Spleen (tissue), 13 donors: ENCODE measurements at regions of chr6 and their contacts with region 1.

Region 1: GRCh38 chr6:32570363-32570905 is 19.2 kb downstream of the HLA-DRB1 start:
- DNase-seq: no peak
- H3K4me3 ChIP-seq: no peak overlapping the region
- H3K27ac ChIP-seq: no peak overlapping the region
- H3K4me1 ChIP-seq: no peaks in the 10 kb centered on the region
- H3K27me3 ChIP-seq: no peaks in the 10 kb centered on the region
- CTCF ChIP-seq: no peak
- POLR2A ChIP-seq: no peak

Region 2: GRCh38 chr6:32445321-32445854 is 125.0 kb before region 1 on chr6:
- intact Hi-C with region 1: no loop called
- DNase-seq: no peak
- H3K4me3 ChIP-seq: no peak overlapping the region
- H3K27ac ChIP-seq: no peak overlapping the region
- H3K4me1 ChIP-seq: peaks cover 0 to 48% (median 31%) of the 10 kb centered on the region in 6 donors
- H3K27me3 ChIP-seq: no peaks in the 10 kb centered on the region
- CTCF ChIP-seq: no peak
- POLR2A ChIP-seq: no peak

Region 3: GRCh38 chr6:32483968-32484636 is 86.3 kb before region 1 on chr6:
- intact Hi-C with region 1: loop called (anchors 5 kb)
- DNase-seq: peak; percentile 72
- H3K4me3 ChIP-seq: no peak overlapping the region
- H3K27ac ChIP-seq: no peak overlapping the region
- H3K4me1 ChIP-seq: no peaks in the 10 kb centered on the region
- H3K27me3 ChIP-seq: no peaks in the 10 kb centered on the region
- CTCF ChIP-seq: no peak
- POLR2A ChIP-seq: no peak

Region 4: DNA sequence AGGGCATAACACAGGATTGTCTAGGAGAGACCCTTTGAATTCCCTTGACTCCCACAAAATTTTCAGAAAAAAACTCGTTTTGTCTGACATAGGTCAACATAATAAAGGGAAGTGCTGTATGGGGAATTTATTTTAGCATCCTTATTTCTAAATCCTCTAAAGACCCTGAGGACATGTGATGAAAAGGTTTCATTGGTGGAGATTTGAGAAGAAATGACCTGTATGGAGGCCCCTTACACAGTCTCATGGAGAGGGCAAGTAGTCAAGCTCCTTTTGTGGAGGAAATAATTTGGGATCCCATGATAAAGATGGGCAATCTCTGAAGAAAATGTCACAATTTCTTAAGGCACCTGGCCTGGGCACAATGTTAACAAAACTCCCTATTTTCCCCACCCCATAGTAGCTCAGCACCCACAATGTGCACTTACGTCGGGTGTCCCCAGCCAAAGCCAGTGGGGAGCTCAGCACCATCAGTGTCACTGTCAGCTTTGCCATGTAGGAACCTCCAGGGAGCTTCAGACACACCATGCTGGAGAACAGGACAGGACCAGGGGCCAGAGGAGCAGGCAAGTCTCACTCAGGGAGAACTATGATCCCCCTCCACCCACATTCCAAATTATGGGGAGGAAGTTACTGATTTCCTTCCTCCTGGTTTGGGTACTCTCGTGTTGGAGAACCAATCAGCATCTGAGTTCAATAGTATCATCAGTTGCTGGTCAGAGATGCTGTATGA is 40.6 kb before region 1 on chr6 and contains the start of gene HLA-DRB5:
- intact Hi-C with region 1: loop called (anchors 5 kb)
- DNase-seq: peak; percentile 83
- H3K4me3 ChIP-seq: peak within 1 kb of the TSS in 4 of 8 donors; percentile 18 to 51 (median 28)
- H3K27ac ChIP-seq: peak within 1 kb of the TSS in 5 of 8 donors; percentile 53 to 90 (median 67)
- H3K4me1 ChIP-seq: no peaks in the 10 kb centered on the region
- H3K27me3 ChIP-seq: no peaks in the 10 kb centered on the region
- CTCF ChIP-seq: no peak
- POLR2A ChIP-seq: peak in 1 of 3 donors; percentile 86
- total RNA-seq, gene HLA-DRB5: 1.9 to 633 (median 121) TPM

Region 5: DNA sequence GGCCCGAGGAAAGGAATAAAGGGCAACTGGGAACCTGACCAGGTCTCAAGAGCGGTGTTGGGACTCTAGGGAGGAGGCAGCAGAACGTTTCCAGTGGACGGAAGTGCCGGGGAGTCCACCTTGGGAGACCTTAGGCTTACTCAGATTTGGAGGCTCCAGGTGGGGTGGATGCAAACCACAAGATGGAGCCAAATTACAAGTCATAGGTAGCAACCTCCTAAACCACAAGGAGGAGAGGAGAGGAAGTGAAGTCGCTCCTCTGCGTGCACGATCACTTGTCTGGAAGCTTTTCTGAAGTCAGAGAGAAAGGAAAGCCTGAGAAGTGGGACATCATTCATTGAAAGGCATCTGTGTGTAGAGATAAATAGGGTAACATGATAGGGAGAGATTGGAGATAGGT is 429.6 kb after region 1 on chr6:
- intact Hi-C with region 1: no loop called
- DNase-seq: no peak
- H3K4me3 ChIP-seq: no peak overlapping the region
- H3K27ac ChIP-seq: peak overlapping the region in 1 of 8 donors; percentile 5
- H3K4me1 ChIP-seq: peaks cover 0 to 12% (median 6%) of the 10 kb centered on the region in 6 donors
- H3K27me3 ChIP-seq: no peaks in the 10 kb centered on the region
- CTCF ChIP-seq: peak in 9 of 11 experiments; percentile 14 to 53 (median 34)
- POLR2A ChIP-seq: no peak